CD8-positive, alpha-beta T cell (primary cell): ENCODE measurements at regions of chr5 and their contacts with region 1.

Region 1: DNA sequence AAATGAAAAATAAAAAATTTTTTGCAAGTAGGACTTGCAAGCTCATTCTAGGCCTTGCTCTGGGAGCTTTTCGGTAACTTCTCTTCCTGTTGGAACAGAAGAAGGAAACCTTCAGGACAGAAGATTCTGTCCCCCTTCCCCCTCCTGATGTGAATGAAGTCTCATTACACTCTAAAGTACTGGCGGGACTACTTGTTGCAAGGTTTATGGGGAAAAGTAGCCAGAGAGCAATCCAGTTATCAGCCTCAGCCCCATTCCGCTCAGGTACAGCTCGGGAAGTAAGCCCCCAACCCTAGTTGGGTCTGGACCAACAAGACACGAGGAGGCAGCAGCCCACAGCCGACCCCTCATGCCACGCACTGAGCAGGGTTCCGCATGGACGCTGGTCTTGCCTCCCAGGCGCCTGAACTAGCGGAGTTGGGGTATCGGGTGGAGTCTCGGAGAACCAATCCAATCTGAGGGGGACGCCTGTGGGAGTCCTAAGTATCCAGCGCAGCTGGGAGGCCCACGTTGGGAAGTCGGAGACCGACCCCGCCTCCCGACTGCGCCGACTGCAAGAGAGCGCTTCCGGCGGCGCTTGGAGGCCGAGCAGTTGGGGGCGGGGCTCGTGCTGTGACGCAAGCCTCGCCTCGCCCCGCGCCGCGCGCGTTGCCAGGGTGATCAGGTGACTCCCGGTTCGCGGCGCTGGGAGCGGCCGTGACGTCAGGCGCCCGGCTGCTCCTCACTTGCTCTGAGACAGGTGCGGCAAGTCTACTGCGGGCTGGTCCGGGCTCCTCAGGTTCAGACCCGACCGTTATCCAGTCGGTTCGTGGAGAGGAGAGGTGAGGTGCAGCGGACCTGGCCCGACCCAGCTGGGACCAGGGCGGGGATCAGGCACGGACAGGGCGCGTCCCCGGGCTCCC is at the start of gene CYSTM1:
- DNase-seq: peak; percentile 92 to 98 (median 96)
- ATAC-seq: peak; percentile 83
- H3K4me3 ChIP-seq: peak within 1 kb of the TSS; percentile 68 to 83
- H3K4me3 Mint-ChIP-seq: peak within 1 kb of the TSS; percentile 91
- H3K27ac ChIP-seq: peak within 1 kb of the TSS; percentile 79 to 88
- H3K27ac Mint-ChIP-seq: peak within 1 kb of the TSS; percentile 95
- H3K4me1 ChIP-seq: peaks cover 9% of the 10 kb centered on the region
- H3K4me1 Mint-ChIP-seq: peaks cover 13% of the 10 kb centered on the region
- H3K27me3 ChIP-seq: peaks cover 0 to 2% of the 10 kb centered on the region in 2 experiments
- H3K27me3 Mint-ChIP-seq: peaks cover 5% of the 10 kb centered on the region
- CTCF ChIP-seq: no peak
- total RNA-seq, gene CYSTM1: 8.1 to 8.6 TPM

Region 2: GRCh38 chr5:139560752-139561654 is 613.7 kb before region 1 on chr5 and contains the start of gene UBE2D2:
- CTCF ChIA-PET with region 1: no interaction called
- POLR2A ChIA-PET with region 1: no interaction called
- intact Hi-C with region 1: loop called in 1 of 2 experiments (anchors 10 kb)
- DNase-seq: peak; percentile 96 to 99 (median 97)
- ATAC-seq: peak; percentile 84
- H3K4me3 ChIP-seq: peak within 1 kb of the TSS; percentile 84 to 91
- H3K4me3 Mint-ChIP-seq: peak within 1 kb of the TSS; percentile 93
- H3K27ac ChIP-seq: peak within 1 kb of the TSS; percentile 87 to 89
- H3K27ac Mint-ChIP-seq: peak within 1 kb of the TSS; percentile 97
- H3K4me1 ChIP-seq: peaks cover 30% of the 10 kb centered on the region
- H3K4me1 Mint-ChIP-seq: peaks cover 35% of the 10 kb centered on the region
- H3K27me3 ChIP-seq: no peaks in the 10 kb centered on the region
- H3K27me3 Mint-ChIP-seq: no peaks in the 10 kb centered on the region
- CTCF ChIP-seq: no peak
- total RNA-seq, gene UBE2D2: 180 TPM

Region 3: DNA sequence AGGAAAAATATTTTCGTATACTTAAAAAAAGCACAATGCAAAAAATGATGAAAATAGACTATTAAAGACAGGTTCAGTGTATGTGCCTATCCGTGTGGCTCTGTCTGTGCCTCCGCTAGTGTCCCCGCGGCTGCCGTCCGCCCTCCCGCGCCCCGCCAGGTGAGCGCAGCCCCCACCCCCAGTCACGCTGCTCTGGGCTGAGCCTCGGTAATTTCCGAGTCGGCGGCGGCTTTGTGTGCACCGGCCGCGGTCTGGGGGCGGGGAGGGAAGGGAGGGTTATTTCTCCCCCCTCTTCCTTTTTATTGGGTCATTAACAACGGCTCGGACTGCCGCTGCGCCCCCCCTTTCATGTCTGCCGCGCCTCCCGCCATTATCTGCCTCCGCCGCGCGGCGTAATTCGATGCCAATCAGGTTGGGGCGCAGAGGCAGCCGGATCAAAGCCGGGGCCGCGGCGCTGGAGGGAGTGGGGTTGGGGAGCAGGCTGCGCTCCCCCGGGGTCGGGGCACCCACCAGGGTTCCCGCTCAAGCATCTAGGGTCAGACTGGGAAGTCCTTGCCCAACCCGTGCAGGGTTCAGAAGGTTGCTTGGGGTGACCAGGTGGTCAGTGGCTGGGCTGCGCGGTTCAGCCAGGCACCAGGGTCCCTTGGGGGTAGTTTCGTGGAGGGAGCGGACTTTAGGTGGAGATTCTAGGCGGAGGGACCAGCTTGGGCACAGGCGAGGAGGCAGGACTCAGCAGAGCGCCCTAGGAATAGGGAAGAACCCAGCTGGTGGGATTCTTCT is 418.6 kb before region 1 on chr5:
- CTCF ChIA-PET with region 1: no interaction called
- POLR2A ChIA-PET with region 1: no interaction called
- intact Hi-C with region 1: no loop called
- DNase-seq: peak in 4 of 9 experiments; percentile 22 to 56 (median 44)
- ATAC-seq: peak; percentile 58
- H3K4me3 ChIP-seq: peak overlapping the region; percentile 11 to 34
- H3K4me3 Mint-ChIP-seq: peak overlapping the region; percentile 68
- H3K27ac ChIP-seq: no peak overlapping the region
- H3K27ac Mint-ChIP-seq: no peak overlapping the region
- H3K4me1 ChIP-seq: peaks cover 21% of the 10 kb centered on the region
- H3K4me1 Mint-ChIP-seq: peaks cover 17% of the 10 kb centered on the region
- H3K27me3 ChIP-seq: peaks cover 11 to 14% of the 10 kb centered on the region in 2 experiments
- H3K27me3 Mint-ChIP-seq: peaks cover 30% of the 10 kb centered on the region
- CTCF ChIP-seq: no peak

Region 4: DNA sequence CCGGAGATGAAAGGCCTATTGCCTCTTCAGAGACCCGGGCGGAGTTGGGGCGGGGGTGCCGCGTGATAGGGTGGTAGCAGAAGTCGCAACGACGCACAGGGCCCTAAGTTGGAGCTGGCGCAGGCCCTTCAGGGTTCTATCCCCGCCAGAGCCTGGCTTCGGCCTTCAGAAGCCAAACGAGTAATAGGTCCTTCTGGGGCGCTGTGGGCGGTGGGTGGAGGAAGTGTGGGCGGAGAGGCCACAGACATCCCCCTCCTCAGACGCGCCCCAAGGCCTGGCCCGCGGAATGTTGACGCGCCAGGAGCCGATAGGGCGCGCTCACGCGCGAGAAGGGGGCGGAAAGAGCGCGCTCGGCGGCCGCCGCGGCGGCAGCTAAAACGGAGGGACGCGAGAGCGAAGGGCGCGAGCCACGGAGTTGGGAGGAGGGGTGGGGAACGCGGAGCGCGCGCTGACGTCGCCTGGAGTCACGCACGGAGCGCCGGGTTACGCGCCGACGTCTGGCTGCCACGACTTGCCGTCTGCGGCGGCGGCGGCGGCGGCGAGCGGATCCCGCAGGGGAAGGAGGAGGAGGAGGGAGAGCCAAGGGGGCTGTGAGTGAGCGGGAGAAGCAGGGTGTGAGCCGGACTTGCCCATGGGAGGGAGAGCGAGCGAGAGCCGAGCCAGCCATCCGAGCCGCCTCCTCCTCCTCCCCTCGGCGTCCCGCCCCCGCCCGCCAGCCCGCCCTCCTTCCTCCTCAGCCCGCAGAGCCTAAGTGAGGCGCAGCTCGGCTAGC is 67.2 kb before region 1 on chr5:
- CTCF ChIA-PET with region 1: no interaction called
- POLR2A ChIA-PET with region 1: interaction called, 9 read pairs
- intact Hi-C with region 1: loop called (anchors 1 to 2 kb)
- DNase-seq: peak; percentile 88 to 99 (median 93)
- ATAC-seq: peak; percentile 85
- H3K4me3 ChIP-seq: peak overlapping the region; percentile 63 to 81
- H3K4me3 Mint-ChIP-seq: peak overlapping the region; percentile 96
- H3K27ac ChIP-seq: peak overlapping the region; percentile 96 to 98
- H3K27ac Mint-ChIP-seq: peak overlapping the region; percentile 98
- H3K4me1 ChIP-seq: peaks cover 45% of the 10 kb centered on the region
- H3K4me1 Mint-ChIP-seq: peaks cover 48% of the 10 kb centered on the region
- H3K27me3 ChIP-seq: no peaks in the 10 kb centered on the region
- H3K27me3 Mint-ChIP-seq: peaks cover 20% of the 10 kb centered on the region
- CTCF ChIP-seq: no peak

Region 5: DNA sequence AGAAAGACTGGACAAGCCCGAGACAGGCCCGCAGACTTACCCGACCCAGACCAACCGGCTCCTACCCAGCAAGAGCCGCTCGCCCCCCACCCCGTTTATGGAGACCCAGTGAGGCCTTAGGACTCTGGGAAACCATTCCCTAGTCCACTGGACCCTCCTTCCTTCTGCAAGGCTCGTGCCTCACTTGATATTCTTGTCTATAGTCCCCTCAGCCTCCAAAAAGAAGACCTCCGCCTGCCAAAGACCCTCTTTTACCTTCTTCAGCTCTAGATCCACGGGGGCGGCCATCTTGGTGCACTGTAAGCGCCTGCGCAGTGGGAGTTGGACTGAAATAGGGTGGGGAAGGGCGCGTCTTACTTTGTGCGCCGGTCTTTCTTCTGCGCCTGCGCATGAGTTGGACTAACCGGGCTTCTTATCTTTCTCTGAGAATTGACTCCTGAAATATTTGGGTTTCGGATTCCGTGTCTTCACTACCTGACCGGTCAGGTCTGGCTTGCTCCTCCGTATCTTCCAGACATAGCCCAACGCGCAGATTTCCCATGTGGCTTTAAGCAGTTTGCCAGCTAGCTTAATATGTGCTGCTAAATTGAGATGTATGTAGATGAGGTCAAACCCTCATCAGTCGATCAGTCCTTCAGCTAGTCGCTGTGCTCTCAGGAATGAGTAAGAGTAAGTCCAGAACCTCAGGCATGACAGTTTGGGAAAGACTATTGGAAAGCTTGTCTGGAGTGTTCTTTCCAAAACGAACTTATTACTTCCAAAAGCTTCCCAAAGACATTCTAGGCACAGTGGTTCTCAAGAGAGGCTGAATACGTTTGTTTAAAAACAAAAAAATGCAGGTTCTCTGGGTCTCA is 128.3 kb after region 1 on chr5 and contains the start of gene PFDN1:
- CTCF ChIA-PET with region 1: no interaction called
- POLR2A ChIA-PET with region 1: no interaction called
- intact Hi-C with region 1: loop called (anchors 1 to 2 kb)
- DNase-seq: peak; percentile 77 to 97 (median 90)
- ATAC-seq: peak; percentile 100
- H3K4me3 ChIP-seq: peak within 1 kb of the TSS; percentile 73 to 87
- H3K4me3 Mint-ChIP-seq: peak within 1 kb of the TSS; percentile 99
- H3K27ac ChIP-seq: peak within 1 kb of the TSS; percentile 61 to 82
- H3K27ac Mint-ChIP-seq: peak within 1 kb of the TSS; percentile 98
- H3K4me1 ChIP-seq: peaks cover 14% of the 10 kb centered on the region
- H3K4me1 Mint-ChIP-seq: peaks cover 29% of the 10 kb centered on the region
- H3K27me3 ChIP-seq: no peaks in the 10 kb centered on the region
- H3K27me3 Mint-ChIP-seq: peaks cover 4% of the 10 kb centered on the region
- CTCF ChIP-seq: no peak
- total RNA-seq, gene PFDN1: 28.4 to 30.5 TPM

Region 6: DNA sequence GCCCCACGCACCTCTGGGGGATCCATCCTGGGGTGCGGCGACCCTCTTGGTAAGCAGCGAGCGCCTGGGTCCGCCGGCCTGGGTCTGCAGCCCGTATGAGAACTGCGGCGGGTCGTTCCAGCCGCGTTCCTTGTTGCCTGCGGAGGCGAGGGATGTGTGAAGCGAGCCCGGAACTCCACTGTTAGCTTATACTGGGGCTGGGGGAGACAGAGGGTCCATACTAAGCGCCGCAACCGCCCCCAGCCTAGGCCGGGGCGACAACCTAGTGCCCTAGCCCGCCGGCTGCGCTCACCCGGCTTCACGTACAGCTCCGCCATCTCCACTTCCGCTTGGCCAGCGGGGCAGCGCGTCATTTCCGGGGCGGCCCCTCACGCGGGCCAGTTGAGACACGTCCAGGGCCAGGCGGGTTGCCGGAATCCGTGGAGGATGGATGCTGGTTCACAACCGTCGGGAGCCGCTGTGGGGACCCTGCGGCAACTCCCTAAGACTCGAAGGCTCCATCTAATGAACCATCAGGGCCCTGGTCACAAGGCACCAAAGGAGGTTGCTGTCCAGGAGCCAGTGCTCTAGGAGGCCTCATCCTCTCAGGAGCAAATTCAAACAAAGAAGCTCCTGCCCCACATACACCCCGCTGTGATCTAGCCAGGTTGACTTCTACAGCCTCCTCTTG is 382.6 kb after region 1 on chr5 and contains the start of gene SRA1:
- CTCF ChIA-PET with region 1: no interaction called
- POLR2A ChIA-PET with region 1: no interaction called
- intact Hi-C with region 1: loop called in 1 of 2 experiments (anchors 2 kb)
- DNase-seq: peak; percentile 53 to 90 (median 80)
- ATAC-seq: peak; percentile 83
- H3K4me3 ChIP-seq: peak within 1 kb of the TSS; percentile 87 to 97
- H3K4me3 Mint-ChIP-seq: peak within 1 kb of the TSS; percentile 91
- H3K27ac ChIP-seq: peak within 1 kb of the TSS; percentile 89 to 97
- H3K27ac Mint-ChIP-seq: peak within 1 kb of the TSS; percentile 96
- H3K4me1 ChIP-seq: peaks cover 28% of the 10 kb centered on the region
- H3K4me1 Mint-ChIP-seq: peaks cover 47% of the 10 kb centered on the region
- H3K27me3 ChIP-seq: no peaks in the 10 kb centered on the region
- H3K27me3 Mint-ChIP-seq: no peaks in the 10 kb centered on the region
- CTCF ChIP-seq: no peak
- total RNA-seq, gene SRA1: 33.7 to 37.2 TPM

Region 7: DNA sequence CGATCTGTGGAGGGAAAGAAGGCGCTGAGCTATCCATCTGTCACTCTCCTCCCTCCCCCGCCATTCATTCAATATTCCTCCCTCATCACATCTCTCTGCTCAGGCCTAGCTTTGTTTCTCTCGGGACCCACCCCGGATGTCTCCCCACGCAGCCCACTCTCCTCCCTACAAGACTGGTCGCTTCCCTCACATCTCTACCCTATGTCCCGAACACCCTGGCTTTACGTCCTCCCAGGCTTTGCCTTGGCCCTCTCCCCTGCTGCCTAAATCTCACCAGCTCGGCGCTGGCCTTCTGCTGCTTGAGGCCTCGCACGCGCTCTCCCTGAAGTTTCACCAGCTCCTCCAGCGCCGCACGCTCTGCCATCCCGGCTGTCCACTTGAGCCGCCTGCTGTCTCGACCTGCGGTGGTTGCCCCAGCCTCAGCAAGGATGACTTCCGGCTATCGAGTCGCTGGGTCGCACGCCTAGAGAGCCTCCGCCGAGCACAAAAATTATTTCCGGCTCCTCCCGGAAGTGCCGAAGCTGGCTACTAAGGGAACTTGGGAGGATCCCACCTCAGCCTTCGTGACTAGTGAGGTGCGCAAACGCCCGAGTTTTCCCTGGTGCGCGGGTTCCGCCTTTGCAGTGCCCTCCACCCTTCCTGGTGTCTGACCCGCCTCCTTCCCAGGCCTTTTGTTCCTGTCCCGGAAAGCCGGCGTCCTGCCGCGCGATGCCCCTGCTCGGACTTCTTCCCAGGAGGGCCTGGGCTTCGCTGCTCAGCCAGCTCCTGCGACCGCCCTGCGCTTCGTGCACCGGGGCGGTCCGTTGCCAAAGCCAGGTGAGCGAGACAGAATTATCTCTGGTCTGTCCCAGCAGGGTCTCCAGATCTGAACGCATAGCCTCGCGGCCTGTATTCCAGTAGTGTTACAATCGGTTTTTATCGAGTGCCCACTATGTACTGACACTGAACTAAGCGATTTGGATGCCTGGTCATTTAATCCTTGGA is 516.5 kb after region 1 on chr5 and contains the starts of genes HARS1 and HARS2:
- CTCF ChIA-PET with region 1: no interaction called
- POLR2A ChIA-PET with region 1: no interaction called
- intact Hi-C with region 1: loop called in 1 of 2 experiments (anchors 10 kb)
- DNase-seq: peak; percentile 58 to 92 (median 83)
- ATAC-seq: peak; percentile 88
- H3K4me3 ChIP-seq: peak within 1 kb of the TSS; percentile 84 to 94
- H3K4me3 Mint-ChIP-seq: peak within 1 kb of the TSS; percentile 99
- H3K27ac ChIP-seq: peak within 1 kb of the TSS; percentile 77 to 87
- H3K27ac Mint-ChIP-seq: peak within 1 kb of the TSS; percentile 98
- H3K4me1 ChIP-seq: peaks cover 23% of the 10 kb centered on the region
- H3K4me1 Mint-ChIP-seq: peaks cover 48% of the 10 kb centered on the region
- H3K27me3 ChIP-seq: no peaks in the 10 kb centered on the region
- H3K27me3 Mint-ChIP-seq: no peaks in the 10 kb centered on the region
- CTCF ChIP-seq: no peak
- total RNA-seq, gene HARS1: 67.3 to 70.2 TPM
- total RNA-seq, gene HARS2: 41.3 to 43.2 TPM